ENCODE measurements at regions of chr2 and their contacts with region 1.

Region 1: DNA sequence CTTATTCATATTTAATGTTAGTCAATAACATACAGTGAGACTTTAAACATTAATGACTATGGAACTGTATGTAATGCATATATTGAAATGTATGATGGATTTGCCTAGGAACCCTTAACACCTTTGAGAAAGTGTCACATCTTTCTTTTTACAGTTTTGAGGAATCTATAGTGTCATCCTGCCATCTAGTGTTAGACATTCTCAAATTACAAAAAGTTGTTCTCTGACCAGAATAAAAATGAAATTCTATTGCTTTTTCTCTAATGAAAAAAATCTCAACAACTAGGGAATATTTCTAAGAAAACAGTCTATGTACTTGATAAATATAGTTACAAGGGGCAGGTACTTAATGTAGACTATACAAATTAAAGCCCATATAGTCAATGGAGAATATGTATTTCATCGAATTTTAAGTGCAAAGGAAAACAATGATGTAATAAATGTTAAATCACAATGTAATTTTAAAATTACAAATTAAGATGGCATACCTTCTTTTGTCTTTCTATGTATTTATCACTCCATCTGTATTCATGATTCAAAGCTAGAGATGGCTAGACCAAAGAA is 5.1 kb upstream of the CALCRL start:
- DNase-seq: no peak
- ATAC-seq: 0 out of 3 replicates have a peak, but pooled peaks have one; percentile 24
- H3K4me3 ChIP-seq: no peak overlapping the region
- H3K27ac ChIP-seq: no peak overlapping the region
- H3K4me1 ChIP-seq: no peaks in the 10 kb centered on the region
- H3K27me3 ChIP-seq: no peaks in the 10 kb centered on the region
- CTCF ChIP-seq: peak; percentile 54
- EP300 ChIP-seq: no peak
- POLR2A ChIP-seq: no peak
- RAD21 ChIP-seq: no peak

Region 2: GRCh38 chr2:187138265-187138664 is 314.9 kb before region 1 on chr2:
- CTCF ChIA-PET with region 1: interaction called, 6 read pairs
- POLR2A ChIA-PET with region 1: no interaction called
- in situ Hi-C with region 1: no loop called
- intact Hi-C with region 1: loop called (anchors 1 kb)
- DNase-seq: peak; percentile 37
- ATAC-seq: peak; percentile 92
- H3K4me3 ChIP-seq: no peak overlapping the region
- H3K27ac ChIP-seq: no peak overlapping the region
- H3K4me1 ChIP-seq: no peaks in the 10 kb centered on the region
- H3K27me3 ChIP-seq: no peaks in the 10 kb centered on the region
- CTCF ChIP-seq: peak; percentile 64
- EP300 ChIP-seq: no peak
- POLR2A ChIP-seq: no peak
- RAD21 ChIP-seq: no peak

Region 3: GRCh38 chr2:187174582-187174981 is 278.6 kb before region 1 on chr2:
- CTCF ChIA-PET with region 1: interaction called, 5 read pairs
- POLR2A ChIA-PET with region 1: no interaction called
- in situ Hi-C with region 1: no loop called
- intact Hi-C with region 1: loop called (anchors 1 kb)
- DNase-seq: peak; percentile 17
- ATAC-seq: peak; percentile 80
- H3K4me3 ChIP-seq: no peak overlapping the region
- H3K27ac ChIP-seq: no peak overlapping the region
- H3K4me1 ChIP-seq: no peaks in the 10 kb centered on the region
- H3K27me3 ChIP-seq: no peaks in the 10 kb centered on the region
- CTCF ChIP-seq: peak; percentile 63
- EP300 ChIP-seq: no peak
- POLR2A ChIP-seq: no peak
- RAD21 ChIP-seq: no peak

Measured in HepG2 (cell line).